Naive thymus-derived CD4-positive, alpha-beta T cell (primary cell): ENCODE measurements at regions of chr11 and their contacts with region 1.

Region 1: DNA sequence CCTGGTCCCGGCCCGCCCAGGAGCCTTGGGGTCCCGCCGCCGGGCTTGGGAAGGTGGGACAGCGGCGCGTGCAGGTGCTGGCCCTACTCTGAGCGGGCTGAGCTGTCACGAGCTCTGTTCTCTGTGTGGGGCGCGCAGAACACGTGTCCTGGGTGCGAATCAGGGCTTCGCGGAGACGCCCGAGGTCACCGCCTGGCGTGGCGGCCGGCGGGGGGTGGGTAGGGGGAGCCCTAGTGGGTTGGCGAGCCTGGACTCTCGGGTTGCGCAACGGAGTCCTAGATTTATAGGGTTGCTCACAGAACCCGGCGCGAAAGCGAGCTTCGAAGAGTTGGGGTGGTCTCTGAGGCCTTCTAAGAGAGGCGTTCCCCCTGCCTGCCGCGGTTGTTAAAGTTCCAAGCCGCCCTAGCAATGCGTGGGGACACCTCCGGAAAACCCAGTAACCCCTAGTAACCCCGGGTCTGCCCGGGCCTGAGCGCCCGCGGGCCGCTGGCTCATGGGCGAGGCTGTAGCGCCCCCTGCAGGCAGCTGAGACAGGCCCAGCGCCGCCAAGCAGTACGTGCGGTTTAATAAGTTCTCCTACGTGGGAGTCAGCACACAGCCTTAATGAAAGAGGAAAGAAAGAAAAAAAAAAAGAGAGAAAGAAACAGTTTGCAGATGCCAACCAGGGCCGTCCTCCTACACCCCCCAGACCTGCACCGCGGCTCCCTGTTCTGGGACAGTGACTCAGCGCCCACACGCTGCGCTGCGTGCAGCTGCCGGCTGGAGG is 2.8 kb downstream of the ADM start:
- DNase-seq: peak; percentile 73 to 88 (median 83)
- ATAC-seq: peak; percentile 83
- H3K4me3 ChIP-seq: peak overlapping the region; percentile 99
- H3K4me3 Mint-ChIP-seq: peak overlapping the region; percentile 64 to 100 (median 95)
- H3K27ac ChIP-seq: no peak overlapping the region
- H3K27ac Mint-ChIP-seq: peak overlapping the region in 6 of 9 donors; percentile 15 to 85 (median 46)
- H3K4me1 ChIP-seq: peaks cover 15 to 37% of the 10 kb centered on the region in 2 donors
- H3K4me1 Mint-ChIP-seq: peaks cover 25 to 57% (median 38%) of the 10 kb centered on the region in 7 donors
- H3K27me3 ChIP-seq: peaks cover 3 to 14% of the 10 kb centered on the region in 2 donors
- H3K27me3 Mint-ChIP-seq: peaks cover 31 to 54% (median 44%) of the 10 kb centered on the region in 5 donors

Region 2: DNA sequence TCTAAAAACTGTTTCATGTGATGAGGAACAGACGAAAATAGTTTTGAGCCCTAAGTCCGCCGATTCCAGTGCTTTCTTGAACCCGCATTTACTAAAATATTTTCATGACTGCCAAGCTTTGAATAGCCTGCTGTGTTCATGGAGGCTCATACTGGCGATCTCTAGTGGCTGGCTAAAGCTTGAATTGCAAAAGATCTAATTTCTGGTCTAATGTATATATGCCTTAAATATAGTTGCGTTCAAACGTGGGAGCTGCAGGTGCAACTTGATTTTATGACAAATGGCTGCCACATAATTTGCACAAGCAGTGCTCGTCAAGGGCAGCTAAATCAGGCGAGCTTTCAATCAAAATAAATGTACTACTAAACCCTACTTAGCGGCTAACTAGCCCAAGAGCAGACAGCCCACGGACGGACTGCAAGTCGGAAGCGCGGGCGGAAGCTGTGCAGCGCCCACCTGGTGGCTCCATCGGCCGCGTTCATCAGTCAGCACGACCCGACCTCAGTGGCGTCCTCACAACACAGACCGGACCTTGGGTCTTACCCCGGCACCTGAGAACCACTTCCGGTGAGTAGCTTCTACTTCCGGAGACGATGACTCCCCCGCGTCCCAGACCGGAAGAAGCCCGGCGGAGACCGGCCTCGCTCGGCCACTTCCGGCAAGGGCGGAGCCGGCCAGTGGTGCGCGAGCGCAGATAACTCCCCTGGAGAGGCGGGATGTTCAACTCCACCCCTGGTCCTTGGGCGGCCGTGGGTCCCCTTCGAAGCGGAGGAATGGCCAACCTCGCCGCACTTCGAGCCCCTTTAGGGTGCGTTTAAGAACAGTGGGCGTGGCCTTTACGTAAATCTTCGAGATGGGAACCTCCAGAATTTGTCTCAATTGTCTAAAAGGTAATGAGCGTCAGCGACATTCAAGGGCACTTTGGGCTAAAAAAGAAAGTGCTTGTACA is 1618.9 kb before region 1 on chr11:
- CTCF ChIA-PET with region 1: no interaction called
- POLR2A ChIA-PET with region 1: no interaction called
- intact Hi-C with region 1: loop called (anchors 5 to 10 kb)
- DNase-seq: peak; percentile 50 to 86 (median 61)
- ATAC-seq: peak; percentile 92
- H3K4me3 ChIP-seq: peak overlapping the region; percentile 80
- H3K4me3 Mint-ChIP-seq: peak overlapping the region; percentile 89 to 99 (median 96)
- H3K27ac ChIP-seq: peak overlapping the region; percentile 85
- H3K27ac Mint-ChIP-seq: peak overlapping the region; percentile 90 to 99 (median 96)
- H3K4me1 ChIP-seq: peaks cover 15 to 17% of the 10 kb centered on the region in 2 donors
- H3K4me1 Mint-ChIP-seq: peaks cover 20 to 63% (median 45%) of the 10 kb centered on the region in 7 donors
- H3K27me3 ChIP-seq: no peaks in the 10 kb centered on the region
- H3K27me3 Mint-ChIP-seq: no peaks in the 10 kb centered on the region

Region 3: DNA sequence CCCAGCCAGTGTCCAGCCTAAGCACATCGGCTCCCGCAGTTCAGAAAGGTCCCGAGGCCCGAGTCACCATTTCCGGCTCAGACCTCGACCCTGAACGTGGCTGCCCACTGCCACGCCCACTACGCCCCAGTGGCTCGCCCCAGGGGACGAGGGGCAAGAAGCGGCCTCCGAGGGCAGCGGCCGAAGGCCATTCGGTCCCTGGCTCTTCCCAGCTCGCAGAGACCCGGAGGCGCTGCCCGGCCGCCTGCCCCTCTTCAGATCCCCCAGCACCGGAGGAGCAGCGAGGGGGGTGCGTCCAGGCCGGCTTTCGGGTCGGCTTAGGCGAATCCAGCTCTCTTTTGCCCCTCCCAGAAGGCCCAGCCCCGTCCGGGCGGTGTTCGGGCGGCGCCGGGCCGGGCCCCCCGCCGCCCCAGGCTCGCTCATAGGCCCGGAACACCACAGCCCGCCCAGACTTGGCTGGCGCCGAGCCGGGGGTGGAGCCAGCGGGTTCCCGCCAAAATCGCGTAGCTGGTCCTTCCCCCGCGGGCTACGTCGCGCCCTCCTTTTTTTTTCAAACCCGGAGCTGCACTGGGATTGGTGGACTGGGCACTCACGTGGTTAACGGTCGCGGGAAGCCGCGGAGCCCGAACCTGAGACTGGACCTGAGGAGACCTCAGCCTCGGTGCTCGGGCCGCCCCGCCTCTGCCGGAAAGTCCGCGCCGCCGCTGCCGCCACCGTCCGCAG is 734.4 kb before region 1 on chr11 and contains the start of gene WEE1:
- CTCF ChIA-PET with region 1: interaction called, 5 read pairs
- POLR2A ChIA-PET with region 1: no interaction called
- intact Hi-C with region 1: loop called (anchors 2 to 10 kb)
- DNase-seq: peak; percentile 84 to 99 (median 88)
- ATAC-seq: peak; percentile 95
- H3K4me3 ChIP-seq: peak within 1 kb of the TSS; percentile 78
- H3K4me3 Mint-ChIP-seq: peak within 1 kb of the TSS; percentile 74 to 94 (median 85)
- H3K27ac ChIP-seq: peak within 1 kb of the TSS; percentile 73
- H3K27ac Mint-ChIP-seq: peak within 1 kb of the TSS in 7 of 9 donors; percentile 43 to 91 (median 59)
- H3K4me1 ChIP-seq: peaks cover 9 to 11% of the 10 kb centered on the region in 2 donors
- H3K4me1 Mint-ChIP-seq: peaks cover 0 to 43% (median 19%) of the 10 kb centered on the region in 7 donors
- H3K27me3 ChIP-seq: peaks cover 0 to 3% of the 10 kb centered on the region in 2 donors
- H3K27me3 Mint-ChIP-seq: peaks cover 3 to 22% (median 11%) of the 10 kb centered on the region in 5 donors
- total RNA-seq, gene WEE1: 0.43 to 47.6 (median 1.9) TPM

Region 4: DNA sequence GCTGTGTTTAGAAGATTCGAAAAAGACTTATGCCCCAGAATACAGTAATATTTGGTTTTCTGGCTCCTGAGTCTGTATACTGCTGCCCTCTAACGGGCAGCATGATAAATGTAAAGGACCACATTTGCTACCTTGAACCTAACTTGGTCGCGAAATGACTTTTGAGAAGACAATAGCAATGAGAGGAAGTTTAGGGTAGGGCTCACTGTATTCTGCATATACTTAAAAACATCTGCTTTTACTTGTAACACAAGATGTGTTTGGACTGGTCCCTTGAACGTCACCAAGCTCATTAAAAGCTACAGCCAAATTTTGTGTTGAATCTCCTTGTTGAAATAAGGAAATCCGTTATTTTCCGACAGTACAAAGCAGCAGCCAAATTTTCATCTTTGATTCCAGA is 334.6 kb before region 1 on chr11:
- CTCF ChIA-PET with region 1: no interaction called
- POLR2A ChIA-PET with region 1: no interaction called
- intact Hi-C with region 1: loop called (anchors 1 to 2 kb)
- DNase-seq: peak in 5 of 9 donors; percentile 10 to 42 (median 24)
- ATAC-seq: peak; percentile 72
- H3K4me3 ChIP-seq: no peak overlapping the region
- H3K4me3 Mint-ChIP-seq: no peak overlapping the region
- H3K27ac ChIP-seq: no peak overlapping the region
- H3K27ac Mint-ChIP-seq: no peak overlapping the region
- H3K4me1 ChIP-seq: no peaks in the 10 kb centered on the region
- H3K4me1 Mint-ChIP-seq: peaks cover 0 to 2% (median 0%) of the 10 kb centered on the region in 7 donors
- H3K27me3 ChIP-seq: no peaks in the 10 kb centered on the region
- H3K27me3 Mint-ChIP-seq: no peaks in the 10 kb centered on the region

Region 5: GRCh38 chr11:9992306-9992705 is 315.3 kb before region 1 on chr11:
- CTCF ChIA-PET with region 1: no interaction called
- POLR2A ChIA-PET with region 1: no interaction called
- intact Hi-C with region 1: no loop called
- DNase-seq: no peak
- ATAC-seq: no peak
- H3K4me3 ChIP-seq: no peak overlapping the region
- H3K4me3 Mint-ChIP-seq: no peak overlapping the region
- H3K27ac ChIP-seq: no peak overlapping the region
- H3K27ac Mint-ChIP-seq: no peak overlapping the region
- H3K4me1 ChIP-seq: no peaks in the 10 kb centered on the region
- H3K4me1 Mint-ChIP-seq: no peaks in the 10 kb centered on the region
- H3K27me3 ChIP-seq: no peaks in the 10 kb centered on the region
- H3K27me3 Mint-ChIP-seq: no peaks in the 10 kb centered on the region

Region 6: DNA sequence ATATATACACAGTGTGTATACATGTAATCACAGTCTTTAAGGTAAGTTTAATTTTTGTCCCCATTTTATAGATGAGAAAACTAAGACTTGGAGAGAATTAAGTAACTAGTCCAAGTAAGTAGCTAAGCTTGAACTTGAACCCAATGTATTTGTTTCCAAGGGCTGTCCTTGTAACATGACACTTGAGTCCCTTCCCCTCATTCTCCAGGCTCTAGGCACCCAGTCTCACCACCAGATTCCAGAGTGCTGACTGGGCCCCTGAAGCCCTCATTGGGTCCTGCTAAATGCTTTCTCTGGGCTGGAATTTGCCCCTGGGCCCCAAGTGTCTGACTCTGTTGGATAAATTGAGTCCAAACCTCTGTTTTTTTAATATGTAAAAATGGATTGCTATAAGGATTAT is 42.7 kb after region 1 on chr11:
- CTCF ChIA-PET with region 1: no interaction called
- POLR2A ChIA-PET with region 1: no interaction called
- intact Hi-C with region 1: no loop called
- DNase-seq: no peak
- ATAC-seq: no peak
- H3K4me3 ChIP-seq: no peak overlapping the region
- H3K4me3 Mint-ChIP-seq: no peak overlapping the region
- H3K27ac ChIP-seq: no peak overlapping the region
- H3K27ac Mint-ChIP-seq: no peak overlapping the region
- H3K4me1 ChIP-seq: no peaks in the 10 kb centered on the region
- H3K4me1 Mint-ChIP-seq: no peaks in the 10 kb centered on the region
- H3K27me3 ChIP-seq: no peaks in the 10 kb centered on the region
- H3K27me3 Mint-ChIP-seq: peaks cover 10 to 24% (median 11%) of the 10 kb centered on the region in 5 donors

Region 7: GRCh38 chr11:10450464-10451425 is 143.1 kb after region 1 on chr11:
- CTCF ChIA-PET with region 1: no interaction called
- POLR2A ChIA-PET with region 1: no interaction called
- intact Hi-C with region 1: loop called (anchors 2 to 5 kb)
- DNase-seq: peak; percentile 34 to 66 (median 59)
- ATAC-seq: peak; percentile 66
- H3K4me3 ChIP-seq: peak overlapping the region; percentile 63
- H3K4me3 Mint-ChIP-seq: peak overlapping the region; percentile 88 to 96 (median 92)
- H3K27ac ChIP-seq: peak overlapping the region; percentile 84
- H3K27ac Mint-ChIP-seq: peak overlapping the region; percentile 87 to 97 (median 95)
- H3K4me1 ChIP-seq: peaks cover 24 to 44% of the 10 kb centered on the region in 2 donors
- H3K4me1 Mint-ChIP-seq: peaks cover 43 to 75% (median 68%) of the 10 kb centered on the region in 7 donors
- H3K27me3 ChIP-seq: no peaks in the 10 kb centered on the region
- H3K27me3 Mint-ChIP-seq: peaks cover 0 to 23% (median 0%) of the 10 kb centered on the region in 5 donors

Region 8: DNA sequence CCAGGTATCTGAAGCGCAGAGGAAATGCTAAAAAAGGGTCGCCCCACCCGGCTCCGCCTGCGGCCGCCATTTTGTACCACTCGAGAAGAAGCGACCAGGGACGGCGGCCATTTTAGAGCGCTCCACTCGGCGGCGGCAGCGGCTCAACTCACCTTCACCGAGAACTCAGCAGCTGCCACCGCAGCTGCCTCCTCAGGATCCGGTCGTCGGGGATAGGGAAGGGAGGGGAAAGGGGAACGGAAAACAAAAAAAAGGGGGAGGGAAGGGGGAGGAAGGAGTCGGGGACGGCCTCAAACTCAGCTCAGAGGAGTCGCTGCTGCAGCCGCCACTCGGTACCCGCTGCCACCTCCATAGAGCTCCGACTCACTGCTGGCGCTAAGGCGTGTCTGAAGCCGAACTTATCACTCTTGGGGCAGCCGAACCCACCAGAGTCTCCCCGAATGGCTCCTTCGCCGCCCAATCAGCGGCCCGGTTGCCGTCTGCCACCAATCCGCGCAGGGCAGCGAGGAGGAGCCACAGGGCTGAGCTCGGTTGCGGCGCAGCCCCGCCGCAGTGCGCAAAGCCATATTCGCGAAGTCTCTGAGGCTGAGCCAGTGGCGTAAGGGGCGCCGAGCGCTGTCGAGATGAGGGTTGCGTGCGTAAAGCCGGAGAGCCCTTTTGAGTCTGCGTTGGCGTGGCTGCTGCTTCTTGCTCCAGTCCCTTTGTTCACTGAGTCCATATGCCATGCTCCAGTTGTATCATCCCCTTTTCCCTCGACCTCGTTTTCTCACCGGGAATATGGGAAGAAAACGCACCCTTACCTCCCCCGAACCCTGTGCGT is 501.1 kb after region 1 on chr11 and contains the start of gene EIF4G2:
- CTCF ChIA-PET with region 1: no interaction called
- POLR2A ChIA-PET with region 1: no interaction called
- intact Hi-C with region 1: loop called (anchors 2 to 5 kb)
- DNase-seq: peak; percentile 97 to 99 (median 99)
- ATAC-seq: peak; percentile 95
- H3K4me3 ChIP-seq: peak within 1 kb of the TSS; percentile 98
- H3K4me3 Mint-ChIP-seq: peak within 1 kb of the TSS; percentile 93 to 98 (median 97)
- H3K27ac ChIP-seq: peak within 1 kb of the TSS; percentile 95
- H3K27ac Mint-ChIP-seq: peak within 1 kb of the TSS; percentile 95 to 99 (median 98)
- H3K4me1 ChIP-seq: peaks cover 29 to 37% of the 10 kb centered on the region in 2 donors
- H3K4me1 Mint-ChIP-seq: peaks cover 25 to 53% (median 43%) of the 10 kb centered on the region in 7 donors
- H3K27me3 ChIP-seq: no peaks in the 10 kb centered on the region
- H3K27me3 Mint-ChIP-seq: peaks cover 0 to 5% (median 0%) of the 10 kb centered on the region in 5 donors
- total RNA-seq, gene EIF4G2: 596 to 843 (median 720) TPM